ENCODE measurements at regions of chr6 and their contacts with region 1.

Region 1: DNA sequence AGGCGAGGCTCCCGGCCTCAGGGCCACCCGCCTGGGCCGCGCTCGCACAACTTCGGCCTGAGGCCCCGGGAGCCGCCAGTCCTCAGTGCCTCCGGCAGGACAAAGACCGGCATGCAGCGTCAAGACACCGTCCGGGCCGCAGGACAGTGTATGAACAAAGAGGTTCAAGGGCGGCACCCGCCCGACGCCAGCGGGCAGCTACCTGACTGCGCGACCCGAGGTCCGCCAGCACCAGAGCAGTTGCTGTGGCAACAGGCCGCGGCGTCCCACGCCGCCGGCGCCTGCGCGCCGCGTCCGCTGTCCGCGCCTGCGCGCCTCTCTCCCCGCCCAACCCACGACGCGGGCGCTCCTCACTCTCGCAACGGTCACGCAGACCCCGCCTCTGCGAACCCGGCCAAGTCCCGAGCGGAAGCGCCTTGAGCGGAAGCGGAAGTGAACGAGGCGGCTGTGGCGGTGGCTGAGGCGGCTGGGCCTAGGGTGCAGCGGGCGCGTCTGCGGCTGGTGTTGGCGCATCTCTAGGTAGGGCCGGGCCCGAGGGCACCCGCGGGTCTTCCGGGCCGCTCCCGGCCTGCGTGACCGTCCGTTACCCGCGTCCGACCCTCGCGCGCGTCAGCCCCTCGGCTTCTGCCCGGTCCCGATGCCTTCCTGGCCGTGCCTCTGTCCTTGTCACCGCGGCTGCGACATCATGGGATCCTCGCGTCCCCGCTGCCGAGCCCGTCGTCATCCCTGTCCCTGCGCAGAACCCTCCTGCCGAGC is at the start of gene FAM120B:
- DNase-seq: peak; percentile 93
- ATAC-seq: peak; percentile 95
- H3K4me3 Mint-ChIP-seq: peak within 1 kb of the TSS; percentile 98
- H3K27ac Mint-ChIP-seq: peak within 1 kb of the TSS; percentile 91
- H3K4me1 Mint-ChIP-seq: peaks cover 47% of the 10 kb centered on the region
- H3K27me3 Mint-ChIP-seq: peaks cover 13% of the 10 kb centered on the region
- CTCF ChIP-seq: no peak
- total RNA-seq, gene FAM120B: 32.2 and 35.1 TPM in 2 replicates

Region 2: GRCh38 chr6:169701954-169702839 is 604.3 kb before region 1 on chr6 and contains the starts of genes C6orf120 and WDR27:
- CTCF ChIA-PET with region 1: no interaction called
- POLR2A ChIA-PET with region 1: no interaction called
- intact Hi-C with region 1: loop called (anchors 1 kb)
- DNase-seq: peak; percentile 96
- ATAC-seq: peak; percentile 87
- H3K4me3 Mint-ChIP-seq: peak within 1 kb of the TSS; percentile 92
- H3K27ac Mint-ChIP-seq: peak within 1 kb of the TSS; percentile 88
- H3K4me1 Mint-ChIP-seq: peaks cover 51% of the 10 kb centered on the region
- H3K27me3 Mint-ChIP-seq: no peaks in the 10 kb centered on the region
- CTCF ChIP-seq: no peak
- total RNA-seq, gene C6orf120: 21.7 and 24.8 TPM in 2 replicates
- total RNA-seq, gene WDR27: 36.8 and 49.1 TPM in 2 replicates

Region 3: DNA sequence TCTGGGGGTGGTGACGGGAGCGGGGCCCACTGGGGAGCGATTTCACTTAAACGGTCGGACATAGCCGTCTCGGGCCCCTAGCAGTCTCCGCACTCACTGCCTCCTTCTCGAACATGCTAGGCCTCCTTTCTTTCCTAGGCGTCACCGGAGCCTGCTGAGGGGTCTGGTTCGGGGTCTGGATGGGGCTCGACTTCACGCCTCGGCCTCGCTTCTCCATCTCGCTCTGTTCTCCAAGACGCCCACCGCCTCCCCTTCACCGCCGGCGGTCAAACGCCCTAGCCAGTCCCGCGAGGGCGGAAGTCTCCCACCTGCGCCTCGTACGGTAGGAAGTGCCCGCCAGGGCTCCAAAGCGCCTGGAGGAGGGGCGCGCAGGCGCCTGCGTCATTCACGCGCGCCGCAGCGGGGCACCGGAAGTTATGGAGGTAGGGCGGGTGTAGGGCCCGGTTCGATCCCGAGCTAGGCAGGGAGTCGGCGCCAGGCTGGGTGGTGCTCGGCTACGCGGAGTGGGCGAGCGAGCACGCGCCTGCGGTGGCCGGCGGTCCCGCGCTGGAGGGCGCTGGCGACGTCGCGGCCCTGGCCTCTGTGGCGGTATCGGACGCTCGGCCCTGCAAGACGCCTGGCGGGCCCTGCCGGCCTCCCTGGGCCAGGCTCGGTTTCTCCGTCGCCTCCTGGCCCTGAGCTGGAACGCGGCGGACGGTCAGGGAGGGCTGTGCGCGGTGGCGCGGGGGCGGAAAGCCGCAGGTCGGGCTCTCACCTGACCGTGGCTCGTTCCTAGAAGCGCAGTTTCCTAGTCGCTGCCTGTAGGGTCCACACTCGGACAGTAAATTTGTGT is 555.0 kb before region 1 on chr6 and contains the starts of genes DYNLT2 and ERMARD:
- CTCF ChIA-PET with region 1: no interaction called
- POLR2A ChIA-PET with region 1: no interaction called
- intact Hi-C with region 1: loop called (anchors 1 kb)
- DNase-seq: peak; percentile 98
- ATAC-seq: peak; percentile 93
- H3K4me3 Mint-ChIP-seq: peak within 1 kb of the TSS; percentile 95
- H3K27ac Mint-ChIP-seq: peak within 1 kb of the TSS; percentile 97
- H3K4me1 Mint-ChIP-seq: peaks cover 30% of the 10 kb centered on the region
- H3K27me3 Mint-ChIP-seq: no peaks in the 10 kb centered on the region
- CTCF ChIP-seq: no peak
- total RNA-seq, gene DYNLT2: 3.7 and 4.4 TPM in 2 replicates
- total RNA-seq, gene ERMARD: 33.5 and 45.4 TPM in 2 replicates

Region 4: GRCh38 chr6:170160031-170160627 is 146.4 kb before region 1 on chr6:
- CTCF ChIA-PET with region 1: no interaction called
- POLR2A ChIA-PET with region 1: no interaction called
- intact Hi-C with region 1: loop called (anchors 5 kb)
- DNase-seq: no peak
- ATAC-seq: no peak
- H3K4me3 Mint-ChIP-seq: no peak overlapping the region
- H3K27ac Mint-ChIP-seq: no peak overlapping the region
- H3K4me1 Mint-ChIP-seq: peaks cover 5% of the 10 kb centered on the region
- H3K27me3 Mint-ChIP-seq: no peaks in the 10 kb centered on the region
- CTCF ChIP-seq: no peak

Region 5: GRCh38 chr6:170200458-170200891 is 106.0 kb before region 1 on chr6:
- CTCF ChIA-PET with region 1: no interaction called
- POLR2A ChIA-PET with region 1: no interaction called
- intact Hi-C with region 1: no loop called
- DNase-seq: no peak
- ATAC-seq: no peak
- H3K4me3 Mint-ChIP-seq: no peak overlapping the region
- H3K27ac Mint-ChIP-seq: no peak overlapping the region
- H3K4me1 Mint-ChIP-seq: no peaks in the 10 kb centered on the region
- H3K27me3 Mint-ChIP-seq: peaks cover 5% of the 10 kb centered on the region
- CTCF ChIP-seq: no peak

Region 6: DNA sequence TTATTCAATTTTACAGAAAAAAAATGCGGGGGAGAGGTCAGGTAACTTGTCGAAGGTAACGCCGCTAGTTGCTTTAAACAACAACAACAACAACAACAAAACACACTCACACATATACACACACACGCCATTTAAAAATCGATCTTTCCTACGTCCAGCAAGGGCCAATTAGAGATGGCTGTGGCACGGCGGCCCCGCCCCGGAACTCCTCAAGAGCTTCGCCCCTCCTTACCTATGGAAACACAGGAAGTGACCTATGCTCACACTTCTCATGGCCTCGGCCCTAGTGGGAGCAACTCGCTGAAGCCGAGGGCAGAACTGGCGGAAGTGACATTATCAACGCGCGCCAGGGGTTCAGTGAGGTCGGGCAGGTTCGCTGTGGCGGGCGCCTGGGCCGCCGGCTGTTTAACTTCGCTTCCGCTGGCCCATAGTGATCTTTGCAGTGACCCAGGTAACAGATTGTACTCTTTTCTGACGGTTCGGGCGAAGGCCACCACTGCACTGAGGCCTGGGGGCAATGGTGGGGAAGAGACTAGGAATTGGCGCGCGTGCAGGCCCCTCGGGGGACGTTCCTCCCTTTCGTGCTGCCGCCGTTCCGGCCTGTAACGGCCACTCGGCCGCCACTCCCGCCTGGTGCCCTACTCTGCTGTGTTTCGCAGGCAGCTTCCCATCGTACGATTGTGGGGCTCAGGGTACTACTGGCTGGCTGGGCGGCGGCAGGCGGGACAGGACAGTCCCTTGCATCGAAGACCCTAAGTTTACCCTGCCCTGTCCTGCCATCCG is 247.7 kb after region 1 on chr6 and contains the start of gene TBP:
- CTCF ChIA-PET with region 1: no interaction called
- POLR2A ChIA-PET with region 1: no interaction called
- intact Hi-C with region 1: loop called (anchors 1 kb)
- DNase-seq: peak; percentile 93
- ATAC-seq: peak; percentile 94
- H3K4me3 Mint-ChIP-seq: no peak within 1 kb of the TSS
- H3K27ac Mint-ChIP-seq: no peak within 1 kb of the TSS
- H3K4me1 Mint-ChIP-seq: peaks cover 25% of the 10 kb centered on the region
- H3K27me3 Mint-ChIP-seq: no peaks in the 10 kb centered on the region
- CTCF ChIP-seq: no peak
- total RNA-seq, gene TBP: 19.4 and 21.6 TPM in 2 replicates

Region 7: GRCh38 chr6:170596426-170596825 is 289.9 kb after region 1 on chr6:
- CTCF ChIA-PET with region 1: no interaction called
- POLR2A ChIA-PET with region 1: no interaction called
- intact Hi-C with region 1: no loop called
- DNase-seq: no peak
- ATAC-seq: no peak
- H3K4me3 Mint-ChIP-seq: no peak overlapping the region
- H3K27ac Mint-ChIP-seq: no peak overlapping the region
- H3K4me1 Mint-ChIP-seq: no peaks in the 10 kb centered on the region
- H3K27me3 Mint-ChIP-seq: peaks cover 22% of the 10 kb centered on the region
- CTCF ChIP-seq: no peak

Measured in activated B cell treated with CpG ODN at 0.5 μM for 24 hours (primary cell).